HepG2 (cell line): ENCODE measurements at regions of chr1 and their contacts with region 1.

Region 1: DNA sequence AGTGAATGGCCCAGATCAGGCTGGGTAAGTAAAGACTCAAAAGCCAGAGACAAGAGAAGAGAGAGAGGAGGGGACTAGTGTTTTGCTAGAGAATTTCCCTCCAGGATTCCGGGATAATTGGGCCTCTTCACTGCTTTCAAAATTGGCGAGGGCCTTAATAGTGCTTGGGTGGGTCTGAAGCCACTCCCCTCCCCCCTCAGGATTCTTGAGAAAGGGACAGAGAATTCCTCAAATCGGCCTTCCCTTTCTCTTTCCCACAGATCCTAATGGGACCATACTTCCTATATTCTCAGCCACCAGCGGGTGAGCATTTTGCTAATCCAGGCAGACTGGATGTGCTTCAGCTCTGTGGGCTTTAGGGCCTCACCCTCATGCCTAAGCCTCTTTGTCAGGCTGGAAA is 11.9 kb downstream of the SFN start:
- DNase-seq: no peak
- ATAC-seq: no peak
- H3K4me3 ChIP-seq: no peak overlapping the region
- H3K27ac ChIP-seq: no peak overlapping the region
- H3K4me1 ChIP-seq: peaks cover 9% of the 10 kb centered on the region
- H3K27me3 ChIP-seq: no peaks in the 10 kb centered on the region
- CTCF ChIP-seq: no peak
- EP300 ChIP-seq: no peak
- POLR2A ChIP-seq: no peak
- RAD21 ChIP-seq: no peak

Region 2: GRCh38 chr1:26811057-26811456 is 63.8 kb before region 1 on chr1:
- CTCF ChIA-PET with region 1: interaction called, 14 read pairs
- POLR2A ChIA-PET with region 1: no interaction called
- in situ Hi-C with region 1: no loop called
- intact Hi-C with region 1: loop called (anchors 5 kb)
- DNase-seq: no peak
- ATAC-seq: no peak
- H3K4me3 ChIP-seq: no peak overlapping the region
- H3K27ac ChIP-seq: no peak overlapping the region
- H3K4me1 ChIP-seq: peaks cover 24% of the 10 kb centered on the region
- H3K27me3 ChIP-seq: no peaks in the 10 kb centered on the region
- CTCF ChIP-seq: no peak
- EP300 ChIP-seq: no peak
- POLR2A ChIP-seq: no peak
- RAD21 ChIP-seq: no peak